GM12878 (cell line): ENCODE measurements at regions of chr2 and their contacts with region 1.

Region 1: DNA sequence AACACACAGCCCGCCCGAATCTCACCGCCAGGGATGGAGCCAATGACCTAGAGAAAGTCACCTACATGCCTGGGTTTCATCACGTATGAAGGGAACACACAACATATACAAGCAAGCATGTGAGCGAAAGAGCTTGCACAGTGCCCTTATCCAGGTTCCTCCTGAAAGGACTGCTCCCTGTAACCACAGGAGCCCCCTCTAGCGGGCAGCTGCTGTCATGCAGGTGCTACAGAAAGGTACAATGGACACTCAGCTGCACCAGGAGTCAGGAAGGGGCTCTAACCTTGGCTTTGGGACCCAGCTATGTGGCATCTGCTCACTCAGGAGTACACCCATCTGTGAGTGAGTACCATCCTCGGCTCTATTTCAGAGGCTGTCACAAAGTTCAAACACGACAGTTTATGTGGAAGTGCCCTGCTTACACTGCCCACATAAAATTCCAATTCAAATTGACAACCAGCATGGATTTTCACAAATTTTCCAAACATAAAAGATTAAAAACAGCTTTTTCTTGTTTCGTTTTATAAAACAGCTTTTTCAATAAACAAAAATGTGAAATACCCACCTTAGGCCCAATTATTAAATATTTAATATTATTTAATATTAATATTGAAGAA is 3.5 kb downstream of the NDUFA10 start:
- DNase-seq: no peak
- ATAC-seq: peak; percentile 33
- H3K4me3 ChIP-seq: no peak overlapping the region
- H3K27ac ChIP-seq: no peak overlapping the region
- H3K4me1 ChIP-seq: no peaks in the 10 kb centered on the region; the same call in none of the 2 replicates
- H3K27me3 ChIP-seq: no peaks in the 10 kb centered on the region
- CTCF ChIP-seq: peak; percentile 69 to 92 (median 88)
- EP300 ChIP-seq: no peak
- POLR2A ChIP-seq: no peak
- RAD21 ChIP-seq: peak; percentile 27; the same call in 1 of the 2 replicates

Region 2: DNA sequence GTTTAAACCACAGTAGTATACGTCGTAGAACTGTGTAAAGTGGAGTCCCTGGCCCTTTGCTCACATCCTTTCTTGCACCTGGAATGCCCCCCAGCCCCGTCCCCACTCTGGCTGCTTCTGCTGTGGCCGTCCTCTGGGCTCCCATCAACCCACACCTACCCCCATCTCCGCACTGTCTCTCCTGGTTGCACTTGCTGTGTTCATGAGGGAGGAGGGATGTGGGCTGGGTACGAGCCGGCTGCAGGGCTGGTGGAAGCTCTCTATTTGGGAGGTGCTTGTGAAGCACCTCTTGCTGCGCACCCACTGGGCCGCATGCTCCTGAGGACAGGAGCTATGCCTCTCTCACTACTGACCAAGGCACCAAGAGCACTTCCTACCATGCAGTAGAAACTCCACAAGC is 26.6 kb after region 1 on chr2:
- CTCF ChIA-PET with region 1: no interaction called
- POLR2A ChIA-PET with region 1: no interaction called
- RAD21 ChIA-PET with region 1: no interaction called
- SMC1A ChIA-PET with region 1: no interaction called
- in situ Hi-C with region 1: no loop called
- intact Hi-C with region 1: no loop called
- DNase-seq: no peak
- ATAC-seq: no peak
- H3K4me3 ChIP-seq: no peak overlapping the region
- H3K27ac ChIP-seq: no peak overlapping the region
- H3K4me1 ChIP-seq: no peaks in the 10 kb centered on the region
- H3K27me3 ChIP-seq: no peaks in the 10 kb centered on the region; a peak in 2 of 4 replicates
- CTCF ChIP-seq: no peak
- EP300 ChIP-seq: no peak
- POLR2A ChIP-seq: no peak
- RAD21 ChIP-seq: no peak

Region 3: DNA sequence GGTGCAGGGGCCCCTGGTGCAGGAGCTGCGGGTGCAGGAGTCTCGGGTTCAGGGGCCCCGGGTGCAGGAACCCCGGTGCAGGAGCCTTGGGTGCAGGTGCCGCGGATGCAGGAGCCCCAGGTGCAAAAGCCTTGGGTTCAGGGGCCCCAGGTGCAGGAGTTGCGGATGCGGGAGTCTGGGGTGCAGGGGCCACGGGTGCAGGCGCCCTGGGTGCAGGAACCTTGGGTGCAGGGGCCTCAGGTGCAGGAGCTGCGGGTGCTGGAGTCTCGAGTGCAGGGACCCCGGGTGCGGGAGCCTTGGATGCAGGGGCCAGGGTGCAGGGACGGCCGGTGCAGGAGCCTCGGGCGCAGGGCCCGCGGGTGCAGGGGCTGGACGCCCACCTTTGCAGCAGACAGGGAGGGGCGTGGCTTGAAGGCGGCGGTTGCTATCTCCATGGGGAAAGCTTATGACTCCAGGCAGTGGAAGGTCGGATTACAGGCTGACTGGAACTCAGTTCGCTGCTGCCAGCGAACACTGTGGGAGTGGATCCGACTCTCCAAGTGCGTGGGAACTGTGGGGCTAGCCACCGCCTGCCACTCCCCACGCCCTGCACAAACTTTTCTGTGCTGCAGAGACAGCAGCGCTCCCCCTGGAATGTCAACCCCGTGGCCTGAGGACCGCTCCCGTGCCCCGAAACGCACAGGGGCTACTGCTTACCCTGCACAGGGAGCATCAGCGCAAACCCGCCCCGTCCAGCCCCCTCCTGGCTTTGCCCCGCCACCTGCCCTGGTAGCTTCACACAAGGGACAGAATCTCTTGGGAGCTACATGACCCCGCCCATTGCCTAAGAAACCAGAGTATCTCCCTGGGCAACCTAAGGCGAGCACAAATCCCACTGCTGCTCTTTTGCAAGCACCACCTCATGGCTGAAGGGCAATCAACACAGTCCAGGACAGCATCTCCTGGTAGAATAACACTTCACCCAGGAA is 74.2 kb after region 1 on chr2:
- CTCF ChIA-PET with region 1: no interaction called
- POLR2A ChIA-PET with region 1: no interaction called
- RAD21 ChIA-PET with region 1: no interaction called
- SMC1A ChIA-PET with region 1: no interaction called
- in situ Hi-C with region 1: no loop called
- intact Hi-C with region 1: no loop called
- DNase-seq: no peak
- ATAC-seq: no peak
- H3K4me3 ChIP-seq: no peak overlapping the region
- H3K27ac ChIP-seq: no peak overlapping the region
- H3K4me1 ChIP-seq: no peaks in the 10 kb centered on the region
- H3K27me3 ChIP-seq: peaks cover 9 to 18% of the 10 kb centered on the region in 2 experiments
- CTCF ChIP-seq: no peak
- EP300 ChIP-seq: no peak
- POLR2A ChIP-seq: no peak
- RAD21 ChIP-seq: no peak

Region 4: DNA sequence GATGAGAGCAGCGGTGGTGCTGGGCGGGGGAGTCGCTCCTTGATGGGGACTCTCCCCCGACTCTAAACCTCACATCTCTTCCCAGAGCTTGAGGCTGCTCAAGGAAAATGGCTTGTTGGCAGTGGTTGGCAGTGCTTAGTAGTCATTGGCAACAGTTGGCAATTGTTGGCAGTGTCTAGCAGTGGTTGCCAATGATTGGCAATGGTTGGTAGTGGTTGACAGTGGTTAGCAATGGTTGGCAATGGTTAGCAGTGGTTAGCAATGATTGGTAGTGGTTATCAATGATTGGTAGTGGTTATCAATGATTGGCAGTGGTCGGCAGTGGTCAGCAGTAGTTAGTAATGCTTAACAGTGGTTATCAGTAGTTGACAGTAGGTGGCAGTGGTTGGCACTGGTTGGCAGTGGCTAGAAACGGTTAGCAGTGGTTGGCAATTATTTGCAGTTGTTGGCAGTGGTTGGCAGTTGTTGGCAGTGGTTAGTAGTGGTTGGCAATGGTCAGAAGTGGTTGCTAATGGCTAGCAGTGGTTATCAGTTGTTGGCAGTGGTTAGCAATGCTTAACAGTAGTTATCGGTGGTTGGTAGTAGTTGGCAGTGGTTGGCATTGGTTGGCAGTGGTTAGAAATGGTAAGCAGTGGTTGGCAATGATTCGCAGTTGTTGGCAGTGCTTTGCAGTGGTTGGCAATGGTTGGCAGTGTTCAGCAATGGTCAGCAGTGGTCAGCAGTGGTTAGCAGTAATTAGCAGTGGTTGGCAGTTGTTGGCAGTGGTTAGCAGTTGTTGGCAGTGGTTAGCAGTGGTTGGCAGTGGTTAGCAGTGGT is 204.3 kb after region 1 on chr2:
- CTCF ChIA-PET with region 1: no interaction called
- POLR2A ChIA-PET with region 1: no interaction called
- RAD21 ChIA-PET with region 1: no interaction called
- SMC1A ChIA-PET with region 1: no interaction called
- in situ Hi-C with region 1: no loop called
- intact Hi-C with region 1: no loop called
- DNase-seq: no peak
- ATAC-seq: no peak
- H3K4me3 ChIP-seq: no peak overlapping the region
- H3K27ac ChIP-seq: no peak overlapping the region
- H3K4me1 ChIP-seq: no peaks in the 10 kb centered on the region
- H3K27me3 ChIP-seq: no peaks in the 10 kb centered on the region; a peak in 2 of 4 replicates
- CTCF ChIP-seq: peak in 2 of 3 experiments; percentile 6 to 24; a peak in 2 of 6 replicates
- EP300 ChIP-seq: no peak
- POLR2A ChIP-seq: no peak
- RAD21 ChIP-seq: no peak

Region 5: GRCh38 chr2:240360645-240361475 is 339.3 kb after region 1 on chr2:
- CTCF ChIA-PET with region 1: no interaction called
- POLR2A ChIA-PET with region 1: interaction called, 10 read pairs
- RAD21 ChIA-PET with region 1: no interaction called
- SMC1A ChIA-PET with region 1: no interaction called
- in situ Hi-C with region 1: no loop called
- intact Hi-C with region 1: no loop called
- DNase-seq: no peak
- ATAC-seq: no peak
- H3K4me3 ChIP-seq: no peak overlapping the region
- H3K27ac ChIP-seq: no peak overlapping the region
- H3K4me1 ChIP-seq: no peaks in the 10 kb centered on the region
- H3K27me3 ChIP-seq: no peaks in the 10 kb centered on the region; a peak in 1 of 4 replicates
- CTCF ChIP-seq: no peak
- EP300 ChIP-seq: no peak
- POLR2A ChIP-seq: no peak
- RAD21 ChIP-seq: no peak